Spleen (tissue), 13 donors: ENCODE measurements at regions of chr12 and their contacts with region 1.

Region 1: DNA sequence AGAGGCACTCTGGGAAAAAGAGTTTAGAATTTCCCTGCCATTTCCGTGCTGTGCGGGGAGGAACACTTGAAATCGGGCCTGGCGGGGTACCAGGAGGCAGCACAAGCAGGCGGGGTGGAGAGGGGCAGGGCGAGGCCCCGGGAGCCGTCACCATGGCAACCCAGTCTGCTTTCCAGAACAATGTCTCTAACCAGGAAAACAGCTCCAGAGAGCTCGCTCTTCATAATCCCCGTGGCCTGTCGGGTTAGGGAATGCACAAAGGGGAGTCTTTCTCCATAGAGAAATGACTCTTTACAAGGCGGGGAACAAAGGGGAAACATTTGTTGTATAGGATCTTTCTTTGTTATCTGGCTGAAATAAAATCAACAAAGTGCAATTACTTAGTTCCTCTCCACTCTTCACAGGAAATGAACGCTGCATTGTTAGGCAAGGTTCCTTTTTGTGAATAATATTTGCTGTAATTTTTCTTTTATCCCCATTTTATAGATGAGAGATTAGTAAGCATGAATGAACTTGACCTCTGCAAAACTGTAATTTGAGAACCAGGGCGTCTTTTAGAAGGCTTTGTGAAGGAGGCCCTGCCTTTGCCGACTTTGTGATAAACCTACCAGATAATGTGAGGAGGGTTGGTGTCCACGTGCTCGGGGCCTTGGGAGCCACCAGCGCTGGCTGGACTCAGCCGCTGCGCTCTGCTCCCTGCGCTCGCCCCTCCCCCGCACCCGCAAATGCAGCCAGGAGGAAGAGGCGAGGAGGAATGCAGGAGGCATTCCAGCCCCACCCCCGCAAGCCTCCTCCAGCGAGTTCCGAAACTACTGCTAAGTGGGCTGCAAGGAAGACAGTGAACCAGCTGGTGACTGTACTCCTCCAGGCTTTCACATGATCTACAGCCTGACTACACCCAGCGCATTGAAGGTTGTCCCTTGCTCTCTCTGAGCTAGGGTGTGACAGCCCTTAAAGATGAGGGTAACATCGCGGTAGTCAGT is 105.2 kb upstream of the ATF7IP start:
- DNase-seq: peak; percentile 90
- H3K4me3 ChIP-seq: peak overlapping the region in 1 of 8 donors; percentile 51
- H3K27ac ChIP-seq: peak overlapping the region; percentile 77 to 93 (median 87)
- H3K4me1 ChIP-seq: peaks cover 22 to 80% (median 56%) of the 10 kb centered on the region in 6 donors
- H3K27me3 ChIP-seq: no peaks in the 10 kb centered on the region
- CTCF ChIP-seq: no peak
- POLR2A ChIP-seq: no peak

Region 2: DNA sequence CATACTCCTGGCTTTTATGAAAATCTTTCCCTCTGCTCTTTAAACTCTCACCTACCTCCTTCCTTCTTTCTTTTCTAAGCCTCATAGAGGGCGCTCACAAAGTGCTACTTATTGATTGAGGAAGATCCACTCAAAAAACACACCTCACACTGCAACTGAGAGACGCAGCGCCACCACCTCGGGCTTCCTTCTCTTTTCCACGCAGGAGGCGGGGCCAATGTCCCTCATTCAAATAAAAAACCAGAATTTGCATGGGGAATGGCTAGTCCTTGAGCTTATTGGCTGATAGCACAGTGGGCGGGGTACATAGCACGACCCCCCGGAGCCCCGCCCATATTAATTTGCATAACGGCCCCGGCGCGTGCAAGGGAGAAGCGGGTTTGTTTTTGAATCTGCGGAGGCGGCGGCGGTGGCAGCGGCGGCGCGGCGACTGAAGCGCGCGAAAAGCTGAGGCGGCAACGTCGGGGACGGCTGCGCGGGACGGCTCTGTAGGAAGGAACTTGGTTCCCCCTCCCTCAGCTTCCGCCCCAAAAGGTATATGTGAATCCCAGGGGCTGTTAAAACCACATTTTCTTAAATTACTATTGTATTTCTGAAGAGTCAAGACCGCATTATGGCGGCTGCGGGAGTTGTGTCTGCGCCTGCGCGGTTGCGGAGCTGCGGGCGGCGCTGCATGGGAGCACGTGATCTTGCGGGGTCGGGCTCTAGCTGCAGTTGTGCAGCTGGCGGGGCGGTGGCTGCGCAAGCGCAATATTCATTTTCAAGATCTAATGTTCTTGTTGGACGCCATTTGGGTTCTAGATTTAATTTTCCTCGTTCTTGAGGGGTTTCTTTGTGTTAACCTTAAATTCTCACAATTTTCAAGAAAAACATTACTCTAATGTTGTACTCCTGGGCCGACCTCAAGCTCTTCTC is 105.2 kb after region 1 on chr12 and contains the start of gene ATF7IP:
- intact Hi-C with region 1: loop called (anchors 2 kb)
- DNase-seq: peak; percentile 98
- H3K4me3 ChIP-seq: peak within 1 kb of the TSS; percentile 45 to 79 (median 56)
- H3K27ac ChIP-seq: peak within 1 kb of the TSS; percentile 97 to 99 (median 98)
- H3K4me1 ChIP-seq: peaks cover 12 to 65% (median 40%) of the 10 kb centered on the region in 6 donors
- H3K27me3 ChIP-seq: no peaks in the 10 kb centered on the region
- CTCF ChIP-seq: peak in 9 of 11 experiments; percentile 20 to 62 (median 47)
- POLR2A ChIP-seq: peak in 2 of 3 donors; percentile 72 to 80
- total RNA-seq, gene ATF7IP: 84.5 to 170 (median 132) TPM